ENCODE measurements at regions of chr15 and their contacts with region 1.

Region 1: GRCh38 chr15:64809649-64810496 is 15.6 kb downstream of the PIF1 start:
- DNase-seq: peak; percentile 86
- CTCF ChIP-seq: peak; percentile 90

Region 2: GRCh38 chr15:64749999-64750657 is 59.7 kb before region 1 on chr15:
- in situ Hi-C with region 1: loop called (anchors 10 kb)
- DNase-seq: no peak
- CTCF ChIP-seq: no peak

Region 3: DNA sequence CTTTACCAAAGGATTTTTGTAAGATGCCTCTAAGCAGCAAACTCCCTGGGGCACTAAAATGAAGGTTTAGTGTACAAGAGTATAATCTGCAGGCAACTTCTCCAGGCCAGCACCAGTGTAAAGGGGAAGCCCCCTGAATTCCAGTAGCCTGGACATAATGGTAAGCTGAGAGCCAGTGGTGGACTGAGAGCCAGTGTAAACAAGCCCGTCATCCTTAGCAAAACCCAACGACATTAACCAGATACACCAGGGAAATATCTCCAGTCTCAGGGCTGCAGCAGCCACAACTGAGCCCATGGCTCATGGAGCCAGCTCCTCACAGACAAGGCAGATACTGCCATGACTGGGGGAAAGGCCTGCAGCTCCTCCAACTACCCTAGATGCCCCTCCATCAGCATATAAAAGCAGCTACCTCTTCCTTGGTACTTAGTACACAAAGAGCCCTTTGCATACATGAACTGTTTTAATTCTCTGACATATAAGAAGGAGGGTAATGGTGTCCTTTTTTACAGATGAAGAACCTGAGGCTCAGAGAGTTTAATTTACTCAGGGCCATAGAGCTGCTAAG is 455.1 kb after region 1 on chr15:
- in situ Hi-C with region 1: no loop called
- DNase-seq: no peak
- CTCF ChIP-seq: no peak